OCI-LY7 (cell line): ENCODE measurements at regions of chr1 and their contacts with region 1.

Region 1: DNA sequence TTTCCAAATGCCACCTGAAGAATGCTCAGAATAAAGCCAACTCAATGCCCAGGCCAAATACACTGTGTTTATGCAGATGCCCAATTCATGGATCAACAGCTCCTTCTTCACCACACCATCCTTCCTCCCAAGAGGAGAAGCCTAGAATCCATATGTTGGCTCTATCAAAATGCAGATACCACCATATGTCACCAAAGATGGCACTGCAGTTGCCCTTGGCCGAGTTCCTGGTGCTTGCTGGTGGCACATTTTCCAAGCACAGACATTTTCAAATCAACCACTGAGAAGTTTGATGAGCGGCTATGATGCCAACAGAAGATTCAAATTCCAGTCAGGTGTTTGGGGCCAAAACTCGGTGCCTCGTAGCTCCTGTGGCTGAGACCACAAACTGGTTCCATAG is 430.3 kb downstream of the AJAP1 start:
- DNase-seq: no peak
- H3K4me3 ChIP-seq: no peak overlapping the region
- H3K27ac ChIP-seq: no peak overlapping the region
- H3K4me1 ChIP-seq: peaks cover 6% of the 10 kb centered on the region
- CTCF ChIP-seq: no peak

Region 2: GRCh38 chr1:5119496-5120234 is 35.0 kb after region 1 on chr1:
- CTCF ChIA-PET with region 1: no interaction called
- POLR2A ChIA-PET with region 1: no interaction called
- intact Hi-C with region 1: loop called (anchors 1 kb)
- DNase-seq: no peak
- H3K4me3 ChIP-seq: no peak overlapping the region
- H3K27ac ChIP-seq: no peak overlapping the region
- H3K4me1 ChIP-seq: no peaks in the 10 kb centered on the region
- CTCF ChIP-seq: no peak